Dorsolateral prefrontal cortex (tissue), 120 donors: ENCODE measurements at regions of chr9 and their contacts with region 1.

Region 1: GRCh38 chr9:128296337-128297220 is 20.5 kb downstream of the SWI5 start:
- DNase-seq: no peak
- H3K4me3 ChIP-seq: no peak overlapping the region
- H3K27ac ChIP-seq: peak overlapping the region in 4 of 59 donors; percentile 3 to 76 (median 33)
- H3K27me3 ChIP-seq: no peaks in the 10 kb centered on the region
- CTCF ChIP-seq: no peak

Region 2: GRCh38 chr9:128361986-128362646 is 65.5 kb after region 1 on chr9:
- intact Hi-C with region 1: loop called (anchors 5 kb)
- DNase-seq: peak; percentile 76 to 93 (median 91)
- H3K4me3 ChIP-seq: peak overlapping the region in 58 of 59 donors; percentile 12 to 67 (median 48)
- H3K27ac ChIP-seq: peak overlapping the region; percentile 44 to 100 (median 95)
- H3K27me3 ChIP-seq: no peaks in the 10 kb centered on the region
- CTCF ChIP-seq: peak; percentile 70 to 99 (median 96)